PC-3 (cell line): ENCODE measurements at regions of chr12 and their contacts with region 1.

Region 1: DNA sequence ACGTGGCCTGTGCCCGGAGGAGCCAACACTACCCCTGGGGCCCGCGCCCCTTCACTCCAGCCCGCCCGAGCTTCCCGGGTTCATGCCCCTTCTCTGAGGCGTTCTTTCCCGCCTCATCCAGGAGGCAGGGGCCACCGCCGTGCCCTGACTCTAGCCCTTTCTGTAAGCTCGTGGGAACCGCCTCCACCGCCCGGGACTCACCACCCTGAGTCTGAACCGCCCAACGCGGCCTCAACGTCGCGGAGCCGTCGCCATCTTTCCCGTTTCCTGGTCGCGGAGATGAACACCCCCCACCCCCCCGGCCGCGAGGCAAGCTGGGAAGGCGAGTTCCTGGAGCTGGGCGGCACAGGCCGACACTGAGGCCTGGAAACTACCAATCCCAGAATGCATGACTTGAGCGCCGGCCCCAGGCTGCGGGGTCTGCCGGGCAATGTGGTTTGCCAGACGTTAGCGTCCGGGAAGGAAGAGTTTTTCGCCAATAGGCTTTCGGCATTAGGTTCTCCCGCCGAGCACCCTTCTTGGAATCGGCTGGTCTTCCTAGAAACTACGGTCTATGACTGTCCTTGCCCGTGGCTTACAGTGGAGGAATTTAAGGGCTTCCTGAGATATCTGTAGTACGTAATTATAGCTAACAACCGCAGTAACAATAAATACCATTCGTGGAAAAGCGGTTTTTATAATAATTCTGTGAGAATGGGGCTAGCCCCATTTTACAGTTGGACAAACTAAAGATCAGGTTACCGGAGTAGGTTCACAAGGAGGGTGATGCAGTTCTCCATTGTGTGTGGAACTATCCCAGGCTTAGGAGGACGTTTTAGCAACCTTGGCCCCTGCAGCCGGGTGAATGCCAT is at the start of gene DDX23:
- DNase-seq: peak; percentile 97
- ATAC-seq: peak; percentile 99
- H3K4me3 ChIP-seq: peak within 1 kb of the TSS; percentile 95
- H3K27ac ChIP-seq: peak within 1 kb of the TSS; percentile 60
- H3K4me1 ChIP-seq: peaks cover 17% of the 10 kb centered on the region
- H3K27me3 ChIP-seq: no peaks in the 10 kb centered on the region
- CTCF ChIP-seq: no peak
- total RNA-seq, gene DDX23: 102 and 105 TPM in 2 replicates

Region 2: GRCh38 chr12:48824112-48824511 is 28.0 kb before region 1 on chr12:
- CTCF ChIA-PET with region 1: no interaction called
- POLR2A ChIA-PET with region 1: no interaction called
- intact Hi-C with region 1: no loop called
- DNase-seq: no peak
- ATAC-seq: no peak
- H3K4me3 ChIP-seq: no peak overlapping the region
- H3K27ac ChIP-seq: no peak overlapping the region
- H3K4me1 ChIP-seq: no peaks in the 10 kb centered on the region
- H3K27me3 ChIP-seq: no peaks in the 10 kb centered on the region
- CTCF ChIP-seq: no peak

Region 3: GRCh38 chr12:48865434-48866290 is 13.6 kb after region 1 on chr12 and contains the start of gene RND1:
- CTCF ChIA-PET with region 1: interaction called, 17 read pairs
- POLR2A ChIA-PET with region 1: interaction called, 5 read pairs
- intact Hi-C with region 1: no loop called
- DNase-seq: peak; percentile 95
- ATAC-seq: peak; percentile 89
- H3K4me3 ChIP-seq: peak within 1 kb of the TSS; percentile 85
- H3K27ac ChIP-seq: peak within 1 kb of the TSS; percentile 80
- H3K4me1 ChIP-seq: peaks cover 20% of the 10 kb centered on the region
- H3K27me3 ChIP-seq: no peaks in the 10 kb centered on the region
- CTCF ChIP-seq: 0 out of 2 replicates have a peak, but pooled peaks have one; percentile 10
- total RNA-seq, gene RND1: 7.6 and 8.3 TPM in 2 replicates

Region 4: GRCh38 chr12:48873096-48873495 is 21.0 kb after region 1 on chr12:
- CTCF ChIA-PET with region 1: interaction called, 10 read pairs
- POLR2A ChIA-PET with region 1: no interaction called
- intact Hi-C with region 1: no loop called
- DNase-seq: no peak
- ATAC-seq: no peak
- H3K4me3 ChIP-seq: no peak overlapping the region
- H3K27ac ChIP-seq: no peak overlapping the region
- H3K4me1 ChIP-seq: no peaks in the 10 kb centered on the region
- H3K27me3 ChIP-seq: no peaks in the 10 kb centered on the region
- CTCF ChIP-seq: no peak

Region 5: DNA sequence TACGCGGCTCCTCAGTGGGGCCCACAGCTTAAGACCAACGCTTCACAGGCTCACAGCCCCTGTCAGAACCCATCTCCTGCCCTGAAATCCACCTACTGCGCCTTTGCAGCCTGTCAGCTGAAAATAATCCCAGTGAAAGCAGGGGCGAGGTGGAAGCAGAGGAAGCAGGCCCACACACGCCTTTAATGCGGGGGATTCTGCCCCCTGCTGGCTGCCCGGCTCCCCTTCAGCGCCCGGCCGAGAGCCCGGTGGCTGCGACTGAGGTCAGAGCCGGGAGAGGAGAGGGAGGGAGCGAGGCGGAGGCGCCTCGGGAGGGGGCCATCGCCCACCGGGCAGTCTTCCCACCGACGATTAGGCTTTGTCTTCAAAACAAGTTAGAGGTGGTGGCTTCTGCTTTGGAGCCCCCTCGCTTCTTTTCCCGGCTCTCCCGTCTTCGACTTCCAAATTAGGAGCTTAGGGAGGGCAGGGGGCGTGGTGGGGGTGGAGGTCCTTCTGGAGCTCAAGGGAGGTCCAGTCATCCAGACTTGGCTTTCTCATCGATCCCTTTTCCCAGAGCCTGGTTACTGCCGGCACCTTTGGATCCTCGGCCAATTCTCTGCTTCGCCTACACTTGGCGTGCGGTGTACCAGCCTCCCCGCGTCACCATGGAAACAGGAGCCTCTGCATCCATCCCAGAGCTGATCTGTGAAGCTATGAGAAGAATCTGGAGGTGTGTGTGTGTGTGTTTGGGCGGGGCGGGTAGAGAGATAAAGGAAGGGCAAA is 38.7 kb after region 1 on chr12:
- CTCF ChIA-PET with region 1: interaction called, 80 read pairs
- POLR2A ChIA-PET with region 1: interaction called, 11 read pairs
- intact Hi-C with region 1: loop called (anchors 1 kb)
- DNase-seq: peak; percentile 82
- ATAC-seq: peak; percentile 100
- H3K4me3 ChIP-seq: peak overlapping the region; percentile 58
- H3K27ac ChIP-seq: no peak overlapping the region
- H3K4me1 ChIP-seq: peaks cover 8% of the 10 kb centered on the region; the same call in 1 of the 2 replicates
- H3K27me3 ChIP-seq: peaks cover 8% of the 10 kb centered on the region
- CTCF ChIP-seq: peak; percentile 95

Region 6: GRCh38 chr12:48936379-48936979 is 84.4 kb after region 1 on chr12:
- CTCF ChIA-PET with region 1: interaction called, 6 read pairs
- POLR2A ChIA-PET with region 1: no interaction called
- intact Hi-C with region 1: loop called (anchors 1 kb)
- DNase-seq: peak; percentile 76
- ATAC-seq: peak; percentile 79
- H3K4me3 ChIP-seq: no peak overlapping the region
- H3K27ac ChIP-seq: no peak overlapping the region
- H3K4me1 ChIP-seq: no peaks in the 10 kb centered on the region
- H3K27me3 ChIP-seq: no peaks in the 10 kb centered on the region
- CTCF ChIP-seq: peak; percentile 94

Region 7: DNA sequence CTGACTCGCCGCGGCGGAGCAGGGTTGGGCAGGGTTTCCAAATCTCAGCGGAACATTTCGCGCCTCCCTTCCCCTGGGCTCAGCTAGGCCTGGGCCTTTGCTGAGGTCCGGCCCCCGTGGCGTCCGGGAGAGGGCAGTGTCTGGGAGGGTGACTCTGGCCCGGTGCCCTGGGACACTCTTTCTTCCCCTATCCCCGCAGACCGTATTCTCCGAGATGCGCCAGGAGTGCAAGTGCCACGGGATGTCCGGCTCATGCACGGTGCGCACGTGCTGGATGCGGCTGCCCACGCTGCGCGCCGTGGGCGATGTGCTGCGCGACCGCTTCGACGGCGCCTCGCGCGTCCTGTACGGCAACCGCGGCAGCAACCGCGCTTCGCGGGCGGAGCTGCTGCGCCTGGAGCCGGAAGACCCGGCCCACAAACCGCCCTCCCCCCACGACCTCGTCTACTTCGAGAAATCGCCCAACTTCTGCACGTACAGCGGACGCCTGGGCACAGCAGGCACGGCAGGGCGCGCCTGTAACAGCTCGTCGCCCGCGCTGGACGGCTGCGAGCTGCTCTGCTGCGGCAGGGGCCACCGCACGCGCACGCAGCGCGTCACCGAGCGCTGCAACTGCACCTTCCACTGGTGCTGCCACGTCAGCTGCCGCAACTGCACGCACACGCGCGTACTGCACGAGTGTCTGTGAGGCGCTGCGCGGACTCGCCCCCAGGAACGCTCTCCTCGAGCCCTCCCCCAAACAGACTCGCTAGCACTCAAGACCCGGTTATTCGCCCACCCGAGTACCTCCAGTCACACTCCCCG is 129.0 kb after region 1 on chr12:
- CTCF ChIA-PET with region 1: interaction called, 3 read pairs
- POLR2A ChIA-PET with region 1: no interaction called
- intact Hi-C with region 1: loop called (anchors 5 kb)
- DNase-seq: no peak
- ATAC-seq: peak; percentile 19
- H3K4me3 ChIP-seq: peak overlapping the region; percentile 67; the same call in 1 of the 2 replicates
- H3K27ac ChIP-seq: no peak overlapping the region
- H3K4me1 ChIP-seq: peaks cover 29% of the 10 kb centered on the region
- H3K27me3 ChIP-seq: peaks cover 52% of the 10 kb centered on the region
- CTCF ChIP-seq: peak; percentile 18; the same call in 1 of the 2 replicates